A549 (cell line): ENCODE measurements at regions of chr1 and their contacts with region 1.

Region 1: DNA sequence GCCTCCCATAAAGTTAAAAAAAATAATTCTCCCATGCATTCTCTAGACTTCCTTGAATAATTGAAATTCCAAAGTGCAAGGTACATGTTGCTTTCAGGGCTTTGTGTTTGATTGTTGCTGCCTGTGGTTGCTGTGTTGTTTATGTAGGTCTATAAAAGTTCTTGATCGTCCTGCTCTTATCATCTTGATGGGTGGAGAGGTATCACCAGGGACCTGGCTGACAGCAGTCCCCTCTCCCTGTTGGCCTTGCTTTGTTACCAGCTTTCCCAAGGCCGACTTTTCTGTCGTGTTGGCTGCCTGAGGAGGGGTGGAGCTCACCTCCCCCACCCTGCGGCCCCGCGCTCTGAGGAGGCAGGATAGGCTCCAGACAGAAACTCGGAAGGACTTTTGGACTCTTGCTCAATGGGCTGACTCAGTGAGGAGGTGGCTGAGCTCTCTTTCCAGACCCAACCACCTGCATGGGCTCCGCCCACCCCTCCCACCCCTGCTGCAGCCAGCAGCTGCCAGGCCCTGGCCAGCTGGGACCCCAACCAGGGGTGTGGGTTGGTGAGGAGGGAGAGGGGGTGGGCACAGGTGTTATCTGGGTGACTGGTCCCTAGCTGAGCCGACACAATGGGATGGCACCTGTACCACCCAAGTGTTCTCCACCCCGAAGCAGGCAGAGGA is 2.0 kb downstream of the INAVA start:
- DNase-seq: peak; percentile 93 to 98
- ATAC-seq: peak; percentile 73 to 78
- H3K4me3 ChIP-seq: peak overlapping the region; percentile 68
- H3K27ac ChIP-seq: peak overlapping the region; percentile 100
- H3K4me1 ChIP-seq: peaks cover 77% of the 10 kb centered on the region
- CTCF ChIP-seq: no peak
- EP300 ChIP-seq: peak; percentile 86 to 91; a peak in 3 of 5 replicates
- POLR2A ChIP-seq: peak; percentile 41; the same call in 1 of the 2 replicates
- RAD21 ChIP-seq: peak in 1 of 2 experiments; percentile 41; a peak in 1 of 5 replicates

Region 2: GRCh38 chr1:200740291-200741208 is 156.1 kb before region 1 on chr1:
- CTCF ChIA-PET with region 1: no interaction called
- POLR2A ChIA-PET with region 1: no interaction called
- DNase-seq: no peak
- ATAC-seq: no peak
- H3K4me3 ChIP-seq: peak overlapping the region; percentile 91
- H3K27ac ChIP-seq: peak overlapping the region; percentile 85 to 98
- H3K4me1 ChIP-seq: peaks cover 38% of the 10 kb centered on the region
- CTCF ChIP-seq: no peak
- EP300 ChIP-seq: no peak
- POLR2A ChIP-seq: no peak
- RAD21 ChIP-seq: no peak

Region 3: DNA sequence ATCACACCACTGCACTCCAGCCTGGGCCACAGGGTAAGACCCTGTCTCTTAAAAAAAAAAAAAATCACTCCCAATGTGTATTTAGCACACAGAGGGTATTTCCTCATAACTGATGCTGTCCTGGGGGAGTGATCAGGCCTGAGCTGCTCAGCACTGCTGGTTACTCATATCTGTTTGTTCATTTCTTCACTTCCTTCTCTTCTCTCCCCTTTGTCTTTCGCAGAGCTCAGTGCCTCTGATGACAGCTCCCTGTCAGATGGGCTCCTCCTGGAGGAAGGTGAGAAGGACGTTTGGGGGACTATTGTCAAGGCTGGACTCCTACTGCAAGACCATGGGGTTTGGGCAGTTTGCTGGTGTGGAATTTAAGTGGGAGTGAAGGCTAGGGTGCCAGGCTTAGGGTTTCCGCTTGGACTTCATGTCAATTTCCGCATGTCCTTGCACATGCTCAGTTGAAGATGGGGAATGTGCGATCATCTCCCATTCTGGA is 11.0 kb after region 1 on chr1:
- CTCF ChIA-PET with region 1: interaction called, 16 read pairs
- POLR2A ChIA-PET with region 1: interaction called, 58 read pairs
- DNase-seq: peak in 1 of 2 experiments; percentile 79
- ATAC-seq: peak; percentile 82 to 91
- H3K4me3 ChIP-seq: no peak overlapping the region
- H3K27ac ChIP-seq: peak overlapping the region; percentile 77 to 82
- H3K4me1 ChIP-seq: peaks cover 76% of the 10 kb centered on the region
- CTCF ChIP-seq: no peak
- EP300 ChIP-seq: peak in 1 of 2 experiments; percentile 48; a peak in 1 of 5 replicates
- POLR2A ChIP-seq: no peak
- RAD21 ChIP-seq: no peak; a peak in 2 of 5 replicates